Activated CD4-positive, alpha-beta T cell treated with anti-CD3 and anti-CD28 coated beads, Interleukin-2, amount 10 ng/mL, durations not matched to agents 24 days and 14 days (primary cell): ENCODE measurements at regions of chr21 and their contacts with region 1.

Region 1: GRCh38 chr21:42009831-42010523 is at the start of gene ZBTB21:
- DNase-seq: peak; percentile 100
- H3K4me3 Mint-ChIP-seq: peak within 1 kb of the TSS; percentile 89
- H3K27ac Mint-ChIP-seq: peak within 1 kb of the TSS; percentile 98
- H3K4me1 Mint-ChIP-seq: peaks cover 36% of the 10 kb centered on the region
- H3K27me3 Mint-ChIP-seq: peaks cover 20% of the 10 kb centered on the region
- total RNA-seq, gene ZBTB21: 35.3 and 38.1 TPM in 2 replicates

Region 2: DNA sequence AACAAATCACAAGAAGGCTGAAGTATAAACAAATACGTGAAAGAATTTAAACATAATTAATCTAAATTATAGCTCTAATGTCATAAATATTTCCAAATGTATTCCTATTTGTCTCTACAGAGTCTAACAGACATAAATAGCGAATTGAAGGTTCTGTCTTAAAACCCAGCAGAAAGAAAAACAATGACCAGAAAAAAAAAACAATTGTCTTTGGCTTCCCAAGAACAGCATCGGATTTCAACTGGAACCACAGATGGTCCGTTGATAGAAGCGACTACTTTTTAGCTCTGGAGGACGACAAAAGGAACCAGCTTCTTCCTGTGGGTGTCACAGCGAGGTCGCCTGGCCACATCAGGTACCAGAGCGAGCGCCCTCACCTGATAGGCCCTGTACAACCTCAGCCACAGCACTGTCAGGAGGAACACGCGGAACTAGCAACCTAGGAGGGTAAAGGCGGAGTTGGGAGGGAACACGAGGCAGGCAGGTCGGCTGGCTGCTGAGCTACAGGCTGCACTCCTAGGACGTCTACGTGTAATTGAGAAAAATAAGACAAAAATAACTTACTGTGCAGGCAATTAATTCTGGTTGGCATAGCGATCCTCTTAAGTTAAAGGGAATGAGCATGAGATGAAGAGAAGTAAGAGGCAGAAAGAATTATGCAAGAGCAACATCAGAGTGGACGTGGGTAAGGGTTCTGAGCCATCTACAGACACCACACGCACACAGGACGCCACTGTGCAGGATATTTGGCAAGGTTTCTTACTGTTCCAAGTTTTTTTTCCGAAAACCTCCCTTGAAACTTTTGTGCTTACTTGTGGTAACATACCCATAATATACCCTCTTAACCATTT is 114.1 kb before region 1 on chr21:
- intact Hi-C with region 1: no loop called
- DNase-seq: peak; percentile 76
- H3K4me3 Mint-ChIP-seq: no peak overlapping the region
- H3K27ac Mint-ChIP-seq: peak overlapping the region; percentile 23
- H3K4me1 Mint-ChIP-seq: peaks cover 19% of the 10 kb centered on the region
- H3K27me3 Mint-ChIP-seq: no peaks in the 10 kb centered on the region

Region 3: DNA sequence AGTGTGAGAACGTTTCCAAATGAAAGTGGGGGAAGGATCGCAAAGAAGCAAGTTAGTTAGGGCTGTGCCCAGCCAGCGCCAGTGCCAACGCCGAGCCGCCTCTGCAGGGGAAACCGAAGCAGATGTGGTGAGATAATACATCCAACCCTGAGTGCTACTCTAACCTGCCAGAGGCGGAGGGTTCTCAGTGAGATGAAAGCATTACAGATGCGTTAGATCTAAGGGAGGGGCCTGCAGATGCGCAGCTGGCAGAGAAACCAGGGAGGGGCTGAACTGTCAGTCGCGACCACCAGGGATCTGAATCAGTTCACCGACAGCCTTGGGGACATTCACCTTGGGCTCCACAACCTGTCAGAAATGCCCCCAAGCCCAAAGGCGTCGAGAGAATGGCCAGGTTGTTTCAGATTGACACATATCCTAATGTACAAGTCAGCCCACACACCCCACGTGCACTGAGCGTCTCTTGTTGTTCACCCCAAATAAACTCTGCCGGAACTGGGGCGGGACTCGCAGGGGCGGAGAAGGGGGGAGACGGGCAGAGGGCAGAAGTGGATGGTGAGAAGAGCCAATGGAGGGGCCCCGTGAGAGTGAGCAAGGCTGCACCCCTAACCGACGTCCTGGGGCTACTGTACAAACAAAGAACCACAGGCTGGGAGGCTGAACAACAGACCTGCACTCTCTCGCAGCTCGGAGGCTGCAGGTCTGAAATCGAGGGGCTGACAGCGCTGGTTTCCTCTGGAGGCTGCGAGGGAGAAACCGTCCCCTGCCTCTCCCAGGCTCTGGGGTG is 52.5 kb after region 1 on chr21:
- intact Hi-C with region 1: loop called (anchors 2 kb)
- DNase-seq: peak; percentile 93
- H3K4me3 Mint-ChIP-seq: peak overlapping the region; percentile 79
- H3K27ac Mint-ChIP-seq: peak overlapping the region; percentile 85
- H3K4me1 Mint-ChIP-seq: peaks cover 39% of the 10 kb centered on the region
- H3K27me3 Mint-ChIP-seq: no peaks in the 10 kb centered on the region

Region 4: GRCh38 chr21:42107881-42108553 is 98.0 kb after region 1 on chr21:
- intact Hi-C with region 1: loop called (anchors 5 kb)
- DNase-seq: peak; percentile 91
- H3K4me3 Mint-ChIP-seq: peak overlapping the region; percentile 46
- H3K27ac Mint-ChIP-seq: no peak overlapping the region
- H3K4me1 Mint-ChIP-seq: peaks cover 5% of the 10 kb centered on the region
- H3K27me3 Mint-ChIP-seq: peaks cover 9% of the 10 kb centered on the region